ENCODE measurements at regions of chr15 and their contacts with region 1.

Region 1: DNA sequence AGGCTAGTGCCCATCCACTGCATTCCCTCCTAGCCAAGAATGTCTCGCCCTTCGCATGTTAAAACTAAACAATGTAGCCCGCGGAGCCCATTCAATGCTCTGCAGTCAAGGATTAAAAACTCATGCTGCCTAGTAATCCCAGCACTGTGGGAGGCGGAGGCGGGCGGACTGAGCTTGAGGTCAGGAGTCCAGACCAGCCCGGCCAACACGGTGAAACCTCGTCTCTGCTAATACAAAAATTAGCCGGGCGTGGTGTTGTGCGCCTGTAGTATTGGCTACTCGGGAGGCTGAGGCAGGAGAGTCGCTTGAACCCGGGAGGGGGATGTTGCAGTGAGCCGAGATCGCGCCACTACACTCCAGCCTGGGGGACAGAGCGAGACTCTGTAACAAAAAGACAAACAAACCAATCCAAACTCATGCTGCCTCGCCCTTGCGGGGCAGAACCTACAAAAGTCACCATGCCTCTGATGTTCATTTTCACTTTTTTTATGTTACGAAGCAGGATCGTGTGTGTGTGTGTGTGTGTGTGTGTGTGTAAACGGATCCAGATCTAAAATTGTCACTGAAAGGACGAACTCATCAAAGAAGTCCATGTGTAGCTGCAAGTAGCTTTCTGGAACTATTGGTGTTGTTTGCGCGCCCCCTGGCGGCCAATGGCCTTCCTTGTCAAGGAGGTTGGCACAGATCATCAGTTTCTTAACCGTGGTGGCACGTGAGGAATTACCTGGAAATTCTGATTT is 54.8 kb upstream of the SPESP1 start:
- DNase-seq: peak; percentile 90 to 96 (median 94)
- H3K4me3 ChIP-seq: peak overlapping the region; percentile 14 to 73 (median 51)
- H3K27ac ChIP-seq: peak overlapping the region in 2 of 59 donors; percentile 27 to 44
- H3K27me3 ChIP-seq: no peaks in the 10 kb centered on the region
- CTCF ChIP-seq: peak; percentile 78 to 96 (median 92)

Region 2: GRCh38 chr15:68304589-68305337 is 570.8 kb before region 1 on chr15:
- intact Hi-C with region 1: loop called (anchors 5 to 10 kb)
- DNase-seq: peak in 1 of 10 donors; percentile 29
- H3K4me3 ChIP-seq: no peak overlapping the region
- H3K27ac ChIP-seq: no peak overlapping the region
- H3K27me3 ChIP-seq: no peaks in the 10 kb centered on the region
- CTCF ChIP-seq: no peak

Region 3: DNA sequence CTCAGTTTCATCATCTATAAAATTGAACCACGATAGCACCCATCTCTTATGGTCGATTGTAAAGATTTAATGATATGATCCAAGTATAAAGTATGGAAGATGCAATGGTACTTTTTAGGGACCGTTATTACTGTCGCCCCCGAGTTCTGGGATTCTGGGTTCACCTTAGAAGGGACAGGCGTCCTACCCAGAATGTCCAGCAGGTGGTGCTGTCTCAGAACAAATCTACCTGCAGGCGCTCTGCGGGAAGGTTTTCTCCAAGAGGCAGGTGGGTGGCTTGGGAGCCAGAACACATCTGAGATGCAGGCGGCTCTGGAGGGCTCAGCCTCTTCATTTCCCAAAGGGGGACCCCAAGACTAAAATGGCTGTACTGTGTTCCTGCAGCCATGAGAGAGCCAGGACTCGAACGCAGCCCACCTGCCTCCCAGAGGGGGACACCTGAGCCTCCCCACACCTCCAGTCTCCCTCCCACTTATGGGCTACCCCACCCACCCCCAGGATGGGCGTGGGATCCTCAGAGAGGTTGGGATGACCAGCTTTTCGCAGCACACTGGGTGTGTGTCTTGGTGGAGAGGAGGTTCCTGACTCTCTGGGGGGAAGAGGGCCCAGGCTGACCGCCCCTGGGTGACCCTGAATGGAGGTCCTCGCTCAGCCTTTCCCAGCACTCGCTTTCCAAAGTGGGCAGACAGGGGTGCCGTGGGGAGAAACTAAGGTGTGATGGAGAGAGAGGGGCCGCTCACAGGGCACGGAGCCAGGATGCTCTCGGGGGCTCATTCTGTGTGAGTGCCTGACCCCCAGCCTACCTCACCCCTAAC is 324.9 kb before region 1 on chr15:
- intact Hi-C with region 1: loop called (anchors 2 to 5 kb)
- DNase-seq: peak; percentile 76 to 91 (median 84)
- H3K4me3 ChIP-seq: no peak overlapping the region
- H3K27ac ChIP-seq: no peak overlapping the region
- H3K27me3 ChIP-seq: no peaks in the 10 kb centered on the region
- CTCF ChIP-seq: peak; percentile 82 to 99 (median 97)

Region 4: DNA sequence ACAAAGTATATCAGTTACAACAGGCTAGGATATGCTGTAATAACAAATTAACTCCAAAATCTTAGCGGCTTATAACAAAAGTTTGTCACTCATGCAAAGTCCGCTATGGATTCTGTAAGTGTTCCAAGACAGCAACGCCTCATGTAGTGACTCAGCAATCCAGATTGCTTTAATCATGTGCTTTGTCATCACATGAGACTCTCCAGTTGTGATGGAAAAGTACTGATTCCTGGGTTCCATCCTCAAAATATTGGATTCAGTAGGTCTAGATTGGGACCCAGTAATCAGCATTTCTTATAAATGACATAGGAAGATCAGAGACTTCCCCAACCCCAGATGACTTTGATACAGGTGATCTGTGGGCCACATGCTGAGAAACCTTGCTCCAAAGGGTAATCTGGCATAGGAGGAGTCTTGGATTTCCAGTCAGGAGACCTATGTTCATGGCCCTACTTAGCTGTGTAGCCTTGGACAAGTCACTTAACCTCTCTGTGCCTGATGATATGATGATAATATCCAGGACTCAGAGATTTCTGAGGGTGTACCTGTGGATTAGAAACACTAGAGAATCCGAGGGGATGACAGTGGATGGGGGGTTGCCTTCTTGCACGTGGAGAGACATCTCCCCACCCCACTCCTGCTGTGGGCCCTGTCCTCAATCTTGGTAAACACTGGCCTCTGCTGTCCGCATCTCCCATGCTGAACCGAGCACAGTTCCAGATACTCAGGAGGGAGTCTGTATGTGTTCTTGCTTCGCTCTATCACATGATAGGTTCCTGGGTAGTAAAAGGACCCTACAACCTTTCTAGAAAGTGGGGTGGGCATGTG is 231.3 kb before region 1 on chr15:
- intact Hi-C with region 1: no loop called
- DNase-seq: peak in 5 of 10 donors; percentile 8 to 43 (median 35)
- H3K4me3 ChIP-seq: no peak overlapping the region
- H3K27ac ChIP-seq: peak overlapping the region in 56 of 59 donors; percentile 11 to 90 (median 81)
- H3K27me3 ChIP-seq: no peaks in the 10 kb centered on the region
- CTCF ChIP-seq: peak in 42 of 56 donors; percentile 14 to 64 (median 38)

Region 5: GRCh38 chr15:68730471-68730919 is 145.1 kb before region 1 on chr15:
- intact Hi-C with region 1: loop called (anchors 1 to 2 kb)
- DNase-seq: peak in 9 of 10 donors; percentile 28 to 77 (median 58)
- H3K4me3 ChIP-seq: no peak overlapping the region
- H3K27ac ChIP-seq: peak overlapping the region in 53 of 59 donors; percentile 12 to 89 (median 65)
- H3K27me3 ChIP-seq: no peaks in the 10 kb centered on the region
- CTCF ChIP-seq: peak; percentile 64 to 89 (median 78)

Region 6: DNA sequence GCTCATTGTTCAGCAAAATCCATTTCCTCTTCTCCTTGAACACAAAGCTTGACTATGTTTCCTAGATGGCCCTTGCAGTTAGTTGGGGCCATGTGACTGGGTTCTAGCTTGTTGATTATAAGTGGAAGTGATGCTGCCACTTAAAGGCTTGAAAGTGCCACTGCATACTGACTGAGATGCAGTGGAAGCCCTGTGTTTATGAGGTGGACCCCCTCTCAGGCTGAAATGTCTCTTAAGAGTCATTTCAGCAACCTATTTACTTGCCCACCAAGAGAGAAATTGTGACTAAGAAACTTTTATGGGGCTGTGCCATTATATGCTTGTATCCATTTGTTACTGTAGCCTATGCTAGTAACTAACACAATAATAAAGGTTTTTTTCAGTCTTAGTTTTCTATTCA is 46.5 kb before region 1 on chr15:
- intact Hi-C with region 1: loop called in 1 of 2 experiments (anchors 5 kb)
- DNase-seq: peak in 2 of 10 donors; percentile 64 to 70
- H3K4me3 ChIP-seq: no peak overlapping the region
- H3K27ac ChIP-seq: peak overlapping the region in 32 of 59 donors; percentile 1 to 72 (median 47)
- H3K27me3 ChIP-seq: no peaks in the 10 kb centered on the region
- CTCF ChIP-seq: peak in 55 of 56 donors; percentile 44 to 91 (median 70)

Region 7: DNA sequence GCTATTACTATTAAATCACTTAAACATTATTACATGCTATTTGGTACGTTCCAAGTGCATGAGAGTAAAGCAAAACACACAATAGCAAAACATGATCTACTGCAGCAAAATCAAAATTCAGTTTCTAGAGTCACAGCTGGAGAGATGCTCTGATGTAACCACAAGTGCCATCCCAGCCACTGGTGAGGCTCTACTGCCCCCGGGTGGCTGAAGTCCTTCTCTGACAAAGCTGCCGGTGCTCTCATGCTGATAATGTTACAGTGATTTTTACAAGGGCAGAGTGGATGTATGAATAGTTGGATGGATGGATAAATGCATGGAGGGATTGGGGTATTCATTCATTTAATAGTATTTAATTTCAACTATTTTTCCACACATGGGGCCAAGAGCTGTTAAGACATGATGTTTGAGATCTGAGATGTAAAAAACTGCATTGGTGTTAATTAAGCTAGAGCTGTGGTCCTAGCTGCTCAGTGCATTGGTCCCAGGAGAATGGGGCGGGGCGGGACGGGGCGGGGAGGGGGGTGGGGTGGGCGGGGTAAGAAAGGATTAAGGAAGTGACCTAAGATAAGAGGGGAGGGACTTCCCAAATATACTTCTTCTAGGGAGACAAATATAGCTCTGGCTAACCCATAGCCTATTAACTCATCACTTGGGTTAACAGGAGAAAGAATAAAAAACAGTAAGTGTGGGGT is 49.5 kb after region 1 on chr15:
- intact Hi-C with region 1: loop called in 1 of 2 experiments (anchors 5 kb)
- DNase-seq: peak; percentile 75 to 92 (median 84)
- H3K4me3 ChIP-seq: peak overlapping the region in 2 of 59 donors; percentile 10 to 25
- H3K27ac ChIP-seq: peak overlapping the region in 1 of 59 donors; percentile 5
- H3K27me3 ChIP-seq: no peaks in the 10 kb centered on the region
- CTCF ChIP-seq: peak; percentile 46 to 93 (median 84)

Measured in dorsolateral prefrontal cortex (tissue), 120 donors.